Activated B cell treated with CpG ODN at 0.5 μM for 24 hours (primary cell): ENCODE measurements at regions of chr19 and their contacts with region 1.

Region 1: DNA sequence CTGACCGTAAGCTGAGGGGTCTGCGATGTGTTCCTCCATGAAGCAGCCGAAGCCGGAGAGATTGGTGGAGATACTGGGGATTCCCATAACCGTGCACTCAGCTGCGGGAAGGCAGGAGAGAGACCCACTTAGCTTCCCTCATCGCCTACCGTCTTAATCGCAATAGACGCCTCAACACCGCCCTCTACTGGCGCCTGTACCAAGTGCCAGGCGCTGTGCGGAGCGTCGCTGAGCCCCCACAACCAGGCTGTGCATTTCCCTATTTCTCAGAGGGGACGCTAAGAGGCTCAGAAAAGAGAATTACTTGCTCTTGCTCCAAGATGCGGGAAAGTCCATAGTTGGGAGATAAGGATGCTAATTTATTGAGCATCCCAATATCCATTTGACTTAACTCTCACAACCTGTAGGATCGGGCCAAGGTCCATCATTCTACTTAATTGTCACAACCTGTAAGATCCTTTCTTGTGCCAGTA is 5.8 kb downstream of the FTL start:
- DNase-seq: peak; percentile 79
- ATAC-seq: peak; percentile 91
- H3K4me3 Mint-ChIP-seq: no peak overlapping the region
- H3K27ac Mint-ChIP-seq: peak overlapping the region; percentile 46
- H3K4me1 Mint-ChIP-seq: peaks cover 30% of the 10 kb centered on the region
- H3K27me3 Mint-ChIP-seq: no peaks in the 10 kb centered on the region
- CTCF ChIP-seq: peak; percentile 97

Region 2: GRCh38 chr19:47094557-47095475 is 1876.1 kb before region 1 on chr19:
- CTCF ChIA-PET with region 1: no interaction called
- POLR2A ChIA-PET with region 1: interaction called, 20 read pairs
- intact Hi-C with region 1: no loop called
- DNase-seq: no peak
- ATAC-seq: no peak
- H3K4me3 Mint-ChIP-seq: peak overlapping the region; percentile 55
- H3K27ac Mint-ChIP-seq: peak overlapping the region; percentile 68
- H3K4me1 Mint-ChIP-seq: peaks cover 44% of the 10 kb centered on the region
- H3K27me3 Mint-ChIP-seq: no peaks in the 10 kb centered on the region
- CTCF ChIP-seq: no peak

Region 3: GRCh38 chr19:48795055-48795684 is 175.8 kb before region 1 on chr19:
- CTCF ChIA-PET with region 1: interaction called, 46 read pairs
- POLR2A ChIA-PET with region 1: interaction called, 10 read pairs
- intact Hi-C with region 1: loop called (anchors 1 kb)
- DNase-seq: peak; percentile 79
- ATAC-seq: peak; percentile 98
- H3K4me3 Mint-ChIP-seq: peak overlapping the region; percentile 94
- H3K27ac Mint-ChIP-seq: peak overlapping the region; percentile 88
- H3K4me1 Mint-ChIP-seq: peaks cover 10% of the 10 kb centered on the region
- H3K27me3 Mint-ChIP-seq: no peaks in the 10 kb centered on the region
- CTCF ChIP-seq: peak; percentile 86

Region 4: GRCh38 chr19:48881741-48882657 is 89.0 kb before region 1 on chr19:
- CTCF ChIA-PET with region 1: interaction called, 3 read pairs
- POLR2A ChIA-PET with region 1: interaction called, 179 read pairs
- intact Hi-C with region 1: no loop called
- DNase-seq: no peak
- ATAC-seq: peak; percentile 71
- H3K4me3 Mint-ChIP-seq: no peak overlapping the region
- H3K27ac Mint-ChIP-seq: peak overlapping the region; percentile 41
- H3K4me1 Mint-ChIP-seq: peaks cover 19% of the 10 kb centered on the region
- H3K27me3 Mint-ChIP-seq: no peaks in the 10 kb centered on the region
- CTCF ChIP-seq: no peak